A673 (cell line): ENCODE measurements at regions of chr11 and their contacts with region 1.

Region 1: GRCh38 chr11:47616726-47617416 is 22.7 kb upstream of the C1QTNF4 start:
- DNase-seq: peak; percentile 82
- H3K4me3 ChIP-seq: no peak overlapping the region
- H3K27ac ChIP-seq: no peak overlapping the region
- H3K4me1 ChIP-seq: no peaks in the 10 kb centered on the region
- H3K27me3 ChIP-seq: no peaks in the 10 kb centered on the region
- CTCF ChIP-seq: peak; percentile 93

Region 2: DNA sequence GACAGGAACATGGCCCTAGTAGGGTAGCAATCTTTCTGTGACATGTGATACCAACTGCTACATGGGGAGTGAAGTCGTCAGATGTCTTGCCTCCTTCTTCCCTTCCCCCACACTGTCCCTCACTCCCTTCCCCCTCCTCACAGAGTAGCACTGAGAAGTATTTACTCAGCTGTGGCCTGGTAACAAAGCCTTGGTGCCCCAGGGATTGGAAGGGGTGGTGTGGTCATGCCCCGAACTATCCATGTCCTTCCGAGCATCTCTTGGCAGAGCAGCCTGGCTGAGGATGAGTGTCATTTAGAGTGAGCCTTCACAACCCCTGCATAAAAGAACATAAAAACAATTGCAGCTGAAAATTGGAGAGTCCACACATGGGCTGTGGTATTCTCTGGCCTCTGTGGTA is 486.3 kb before region 1 on chr11:
- CTCF ChIA-PET with region 1: interaction called, 10 read pairs
- POLR2A ChIA-PET with region 1: no interaction called
- intact Hi-C with region 1: no loop called
- DNase-seq: no peak
- H3K4me3 ChIP-seq: no peak overlapping the region
- H3K27ac ChIP-seq: no peak overlapping the region
- H3K4me1 ChIP-seq: no peaks in the 10 kb centered on the region
- H3K27me3 ChIP-seq: no peaks in the 10 kb centered on the region
- CTCF ChIP-seq: no peak

Region 3: DNA sequence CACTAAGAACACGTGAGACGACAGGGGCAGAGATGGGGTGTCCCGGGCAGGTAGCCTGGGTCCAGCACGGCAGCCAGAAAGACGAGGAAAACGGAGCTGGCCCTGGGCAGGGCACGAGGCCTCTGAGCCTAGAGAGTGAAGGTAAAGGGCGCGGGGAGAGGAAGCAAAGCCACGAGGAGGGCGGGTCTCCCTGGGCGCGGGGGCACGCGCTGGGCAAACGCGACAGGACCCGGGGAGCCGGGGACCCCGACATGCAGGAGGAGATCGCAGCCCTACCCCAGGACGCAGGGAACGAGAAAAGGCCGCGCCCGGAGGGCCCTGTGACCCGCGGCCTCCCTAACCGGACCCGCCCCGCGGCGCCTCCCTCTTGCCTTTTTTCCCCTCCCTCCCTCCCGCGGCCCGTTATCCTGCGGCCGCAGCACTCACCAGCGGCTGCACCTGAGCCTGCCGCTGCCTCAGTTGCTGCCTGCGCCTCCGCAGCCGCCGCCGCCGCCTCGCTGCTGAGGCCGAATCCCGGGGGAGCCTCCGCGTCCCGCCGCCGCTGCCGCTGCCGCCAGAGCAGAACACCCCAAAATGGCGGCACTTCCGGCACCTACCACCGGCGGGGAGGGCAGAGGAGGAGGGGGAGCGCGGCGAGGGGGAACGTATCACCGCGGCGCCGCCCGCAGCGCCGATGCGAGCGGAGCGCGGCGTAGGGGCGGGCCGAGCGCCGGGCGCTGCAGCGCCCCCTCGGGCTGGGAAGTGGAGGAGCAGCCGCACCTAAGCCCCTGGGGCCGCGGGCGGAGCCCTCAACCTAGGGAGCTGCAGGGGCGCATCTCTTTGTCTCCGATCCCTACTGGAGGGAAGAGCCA is 64.1 kb before region 1 on chr11 and contains the start of gene CELF1:
- CTCF ChIA-PET with region 1: no interaction called
- POLR2A ChIA-PET with region 1: interaction called, 12 read pairs
- intact Hi-C with region 1: no loop called
- DNase-seq: peak; percentile 100
- H3K4me3 ChIP-seq: peak within 1 kb of the TSS; percentile 63
- H3K27ac ChIP-seq: peak within 1 kb of the TSS; percentile 91
- H3K4me1 ChIP-seq: peaks cover 21% of the 10 kb centered on the region
- H3K27me3 ChIP-seq: no peaks in the 10 kb centered on the region
- CTCF ChIP-seq: peak; percentile 93
- total RNA-seq, gene CELF1: 246 and 257 TPM in 2 replicates